ENCODE measurements at regions of chr17 and their contacts with region 1.

Region 1: GRCh38 chr17:49575579-49576087 is at the start of gene NXPH3:
- DNase-seq: peak; percentile 89
- CTCF ChIP-seq: peak; percentile 78

Region 2: DNA sequence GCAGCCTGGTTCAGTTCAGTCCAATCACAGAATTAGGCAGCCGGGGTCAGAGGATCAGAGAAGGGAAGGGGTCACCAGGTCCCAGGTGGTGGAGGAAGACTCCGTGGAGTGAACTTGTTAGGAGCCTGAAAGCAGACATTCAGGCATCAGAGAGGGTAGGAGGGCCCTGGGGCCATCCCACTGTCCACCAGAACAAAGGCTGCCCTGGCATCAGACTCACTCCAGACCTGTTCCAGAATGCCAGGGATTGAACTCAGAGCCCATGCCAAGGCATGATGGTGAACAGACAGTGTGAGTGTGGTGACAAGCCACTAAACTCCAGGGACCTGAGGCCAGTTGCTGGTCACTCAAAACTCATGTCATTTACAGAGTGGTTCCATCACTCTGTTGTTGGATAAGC is 405.4 kb before region 1 on chr17:
- in situ Hi-C with region 1: no loop called
- DNase-seq: no peak
- CTCF ChIP-seq: no peak

Region 3: DNA sequence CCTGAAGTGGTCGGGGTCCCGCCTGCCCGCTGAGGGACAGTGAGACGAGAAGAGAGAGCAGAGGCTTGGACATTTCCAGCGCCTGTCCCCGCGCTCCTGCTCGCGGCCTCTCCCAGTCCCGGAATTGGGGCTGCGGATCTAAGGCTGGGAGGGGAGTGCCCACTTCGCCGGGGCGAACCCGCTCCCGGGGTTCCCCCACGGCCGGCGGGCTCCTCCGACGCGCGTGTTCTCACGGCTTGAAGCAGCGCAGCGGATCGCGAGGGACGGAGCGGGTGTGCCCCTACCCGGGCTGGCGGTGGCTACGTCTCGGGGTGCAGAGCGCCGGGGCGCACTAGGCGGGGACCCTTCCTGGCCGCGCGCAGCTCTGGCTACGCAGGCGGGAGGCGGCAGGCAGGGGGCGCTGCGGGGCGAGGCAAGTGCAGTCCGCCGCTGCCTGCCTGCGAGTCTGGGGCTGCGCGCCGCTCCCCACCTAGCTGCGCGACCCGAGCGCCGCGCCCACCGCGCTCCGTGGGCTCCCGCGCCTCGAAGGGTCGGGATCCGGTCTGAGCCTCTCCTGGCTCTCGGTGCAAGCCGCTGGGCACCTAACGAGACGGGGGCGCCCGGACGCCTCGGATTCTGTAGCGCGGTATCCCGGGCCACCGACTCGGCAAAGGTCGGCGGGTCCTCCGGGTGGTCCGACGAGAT is 79.3 kb before region 1 on chr17:
- in situ Hi-C with region 1: no loop called
- DNase-seq: peak; percentile 92
- CTCF ChIP-seq: peak; percentile 95

Region 4: DNA sequence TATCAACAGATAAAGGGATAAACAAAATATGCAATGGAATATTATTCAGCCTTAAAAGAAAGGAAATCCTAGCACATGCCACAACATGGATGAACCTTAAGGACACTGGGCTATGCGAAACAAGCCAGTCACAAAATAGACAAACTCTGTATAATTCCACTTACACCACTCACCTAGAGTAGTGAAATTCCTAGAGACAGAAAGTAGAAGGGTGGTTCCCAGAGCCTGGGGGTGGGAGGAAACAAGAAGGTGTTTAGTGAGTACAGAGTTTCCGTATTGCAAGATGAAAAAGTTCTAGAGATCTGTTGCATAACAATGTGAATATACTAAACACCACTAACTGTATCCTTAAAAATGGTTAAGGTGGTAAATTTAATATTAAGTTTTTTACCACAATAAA is 92.2 kb after region 1 on chr17:
- in situ Hi-C with region 1: no loop called
- DNase-seq: no peak
- CTCF ChIP-seq: no peak

Region 5: GRCh38 chr17:49694847-49695683 is 119.4 kb after region 1 on chr17:
- in situ Hi-C with region 1: loop called (anchors 5 kb)
- DNase-seq: peak; percentile 70
- CTCF ChIP-seq: peak; percentile 86

Region 6: GRCh38 chr17:49843774-49844350 is 268.2 kb after region 1 on chr17:
- in situ Hi-C with region 1: loop called (anchors 10 kb)
- DNase-seq: no peak
- CTCF ChIP-seq: peak; percentile 40